ENCODE measurements at regions of chr6 and their contacts with region 1.

Region 1: DNA sequence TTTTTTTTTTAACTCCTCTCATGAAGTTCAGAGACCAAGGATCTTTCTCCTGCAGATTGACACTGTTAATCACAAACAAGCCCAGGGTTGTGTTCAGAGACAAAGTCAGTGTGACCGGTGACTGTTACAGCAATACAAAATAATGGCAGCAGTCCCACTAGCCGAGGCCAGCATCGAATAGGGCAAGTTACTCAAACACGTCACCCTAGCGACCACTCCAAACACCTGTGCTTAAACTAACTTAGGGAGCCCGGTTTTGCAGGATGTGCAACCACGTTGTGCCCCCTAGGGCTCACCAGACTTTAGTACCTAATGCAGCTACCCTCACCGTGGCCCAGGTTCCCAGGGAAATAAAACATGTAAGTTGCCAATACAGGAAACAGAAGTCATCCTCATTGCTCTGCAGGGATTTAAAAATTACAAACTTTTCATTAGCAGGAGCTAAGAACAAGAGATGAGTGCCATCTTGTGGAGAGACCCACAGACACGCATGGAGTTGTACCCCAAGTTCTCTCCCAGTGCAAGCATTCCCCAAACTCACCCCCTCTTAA is 38.1 kb downstream of the FAM50B start:
- DNase-seq: no peak
- ATAC-seq: peak in 3 of 4 donors; percentile 23 to 36 (median 25)
- H3K4me3 ChIP-seq: no peak overlapping the region
- H3K27ac ChIP-seq: peak overlapping the region in 1 of 12 donors; percentile 23
- H3K4me1 ChIP-seq: peaks cover 0 to 52% (median 26%) of the 10 kb centered on the region in 12 donors
- H3K27me3 ChIP-seq: no peaks in the 10 kb centered on the region
- CTCF ChIP-seq: peak; percentile 37 to 70 (median 56)
- POLR2A ChIP-seq: no peak

Region 2: DNA sequence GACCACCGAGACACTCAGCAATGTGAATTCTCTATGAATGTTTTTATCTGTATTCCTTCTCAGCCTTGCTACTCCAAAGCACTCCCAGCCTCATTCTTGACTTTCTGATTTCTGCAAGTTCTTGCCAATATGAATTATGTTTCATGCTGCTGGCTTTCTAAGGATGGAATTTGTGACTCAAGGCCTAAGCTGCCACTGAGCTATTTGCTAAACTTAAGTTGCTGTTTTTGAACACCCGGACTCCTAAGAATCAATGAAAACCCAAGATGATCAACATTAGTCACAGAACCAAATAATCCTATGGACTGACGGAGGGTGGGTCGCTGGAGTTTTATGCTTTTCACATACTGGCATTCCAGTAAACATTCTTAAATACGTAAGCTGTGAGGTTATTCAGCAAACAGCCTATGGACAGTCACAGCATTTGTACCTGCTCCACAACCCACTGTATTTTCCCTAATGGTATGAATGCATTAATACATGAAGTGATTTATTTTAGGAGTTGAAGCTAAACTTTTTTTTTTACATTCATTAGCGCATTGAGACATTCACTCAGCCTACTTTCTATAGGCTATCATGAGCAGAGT is 127.5 kb before region 1 on chr6:
- intact Hi-C with region 1: no loop called
- DNase-seq: no peak
- ATAC-seq: no peak
- H3K4me3 ChIP-seq: no peak overlapping the region
- H3K27ac ChIP-seq: no peak overlapping the region
- H3K4me1 ChIP-seq: peaks cover 0 to 3% (median 0%) of the 10 kb centered on the region in 12 donors
- H3K27me3 ChIP-seq: no peaks in the 10 kb centered on the region
- CTCF ChIP-seq: no peak
- POLR2A ChIP-seq: no peak

Region 3: DNA sequence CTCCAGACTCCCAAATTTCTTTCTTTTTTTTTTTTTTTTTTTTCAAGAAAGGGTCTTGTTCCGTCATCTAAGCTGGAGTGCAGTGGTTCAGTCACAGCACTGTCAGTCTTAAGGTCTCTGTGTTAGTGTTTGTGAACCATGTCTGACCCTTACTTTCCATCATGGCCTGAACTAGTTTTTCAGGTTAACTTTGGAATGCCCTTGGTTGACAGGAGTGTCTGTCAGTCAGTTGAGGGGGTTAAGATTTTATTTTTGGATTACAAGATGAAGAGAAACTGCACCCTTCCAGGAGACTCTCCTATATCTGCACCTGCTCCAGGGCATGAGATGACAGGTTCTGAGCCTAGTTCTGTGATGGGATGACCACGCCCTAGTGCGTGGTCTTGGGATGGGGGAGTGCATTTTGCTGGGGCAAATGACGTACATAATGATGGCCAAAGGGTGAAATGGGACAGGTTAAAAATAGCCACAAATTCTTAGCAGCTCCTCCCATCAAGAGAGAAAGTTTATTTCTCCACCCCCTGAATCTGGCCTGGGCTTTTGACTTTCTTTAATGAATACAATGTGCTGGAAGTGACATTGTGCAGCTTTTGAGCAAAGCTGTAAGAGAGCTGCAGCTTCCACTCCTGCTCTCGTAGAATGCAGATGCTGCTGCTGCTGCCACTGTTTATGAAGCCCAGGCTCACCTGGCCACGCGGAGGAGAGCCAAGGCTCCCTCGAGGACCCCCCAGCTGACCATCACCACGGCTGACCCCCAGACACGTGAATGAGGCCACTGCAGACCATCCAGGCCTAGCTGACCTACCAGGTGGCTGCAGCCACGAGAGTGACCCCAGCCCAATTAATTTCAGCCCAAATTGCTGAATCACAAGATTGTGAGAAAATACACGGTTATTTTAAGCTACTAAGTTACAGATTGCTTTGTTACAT is 67.8 kb before region 1 on chr6:
- intact Hi-C with region 1: loop called in 1 of 10 experiments (anchors 5 kb)
- DNase-seq: no peak
- ATAC-seq: peak in 1 of 4 donors; percentile 8
- H3K4me3 ChIP-seq: no peak overlapping the region
- H3K27ac ChIP-seq: peak overlapping the region in 1 of 12 donors; percentile 2
- H3K4me1 ChIP-seq: peaks cover 0 to 20% (median 13%) of the 10 kb centered on the region in 12 donors
- H3K27me3 ChIP-seq: no peaks in the 10 kb centered on the region
- CTCF ChIP-seq: no peak
- POLR2A ChIP-seq: no peak

Region 4: DNA sequence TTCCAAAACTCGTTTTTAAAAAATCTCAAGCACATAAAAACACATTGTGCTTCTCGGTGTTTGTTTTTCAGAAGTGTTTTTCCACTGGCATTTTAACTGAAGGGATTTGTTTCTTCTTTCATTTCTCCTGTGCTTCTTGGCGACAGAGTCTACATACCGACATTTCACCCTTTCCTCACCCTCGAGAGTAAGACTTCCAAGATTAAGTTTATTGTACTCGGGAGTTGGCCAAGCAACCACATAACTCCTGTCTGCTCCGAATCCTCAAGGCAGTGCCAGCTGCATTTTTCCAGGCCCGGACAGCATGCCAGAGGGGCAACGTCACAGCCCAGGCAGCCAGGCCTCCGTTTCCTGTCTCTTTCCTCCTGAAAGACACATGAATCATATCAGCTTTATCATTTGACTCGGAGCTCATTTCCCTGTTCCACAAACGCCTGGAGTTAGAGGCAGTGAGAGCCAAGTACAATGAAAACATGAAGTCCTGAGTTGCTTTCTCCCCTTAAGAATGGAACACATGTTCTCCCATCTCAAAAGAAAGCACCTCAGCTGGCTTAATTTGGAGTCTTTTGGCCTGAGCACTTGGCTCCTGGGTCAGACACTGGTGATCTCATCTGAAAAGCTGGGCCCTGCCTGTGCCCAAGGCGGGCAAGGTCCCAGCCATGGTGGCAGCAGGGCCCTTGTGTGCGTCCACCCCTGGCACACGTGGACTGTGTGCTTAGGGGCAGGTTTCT is 61.2 kb before region 1 on chr6:
- intact Hi-C with region 1: loop called in 1 of 10 experiments (anchors 5 kb)
- DNase-seq: peak; percentile 79 to 94 (median 86)
- ATAC-seq: peak; percentile 74 to 96 (median 94)
- H3K4me3 ChIP-seq: peak overlapping the region in 10 of 12 donors; percentile 2 to 41 (median 14)
- H3K27ac ChIP-seq: peak overlapping the region; percentile 82 to 94 (median 87)
- H3K4me1 ChIP-seq: peaks cover 9 to 45% (median 32%) of the 10 kb centered on the region in 12 donors
- H3K27me3 ChIP-seq: no peaks in the 10 kb centered on the region
- CTCF ChIP-seq: no peak
- POLR2A ChIP-seq: peak in 1 of 2 donors; percentile 30

Region 5: GRCh38 chr6:3929281-3929798 is 42.1 kb after region 1 on chr6:
- intact Hi-C with region 1: loop called in 9 of 10 experiments (anchors 2 to 5 kb)
- DNase-seq: peak in 1 of 5 donors; percentile 46
- ATAC-seq: peak in 1 of 4 donors; percentile 36
- H3K4me3 ChIP-seq: no peak overlapping the region
- H3K27ac ChIP-seq: peak overlapping the region in 3 of 12 donors; percentile 15 to 64 (median 26)
- H3K4me1 ChIP-seq: peaks cover 0 to 33% (median 9%) of the 10 kb centered on the region in 12 donors
- H3K27me3 ChIP-seq: no peaks in the 10 kb centered on the region
- CTCF ChIP-seq: no peak
- POLR2A ChIP-seq: no peak

Region 6: GRCh38 chr6:3977875-3978711 is 90.9 kb after region 1 on chr6:
- intact Hi-C with region 1: loop called in 2 of 10 experiments (anchors 2 to 10 kb)
- DNase-seq: peak in 3 of 5 donors; percentile 15 to 40 (median 32)
- ATAC-seq: peak in 3 of 4 donors; percentile 86 to 92 (median 87)
- H3K4me3 ChIP-seq: peak overlapping the region in 1 of 12 donors; percentile 4
- H3K27ac ChIP-seq: no peak overlapping the region
- H3K4me1 ChIP-seq: peaks cover 0 to 8% (median 0%) of the 10 kb centered on the region in 12 donors
- H3K27me3 ChIP-seq: no peaks in the 10 kb centered on the region
- CTCF ChIP-seq: peak; percentile 41 to 74 (median 60)
- POLR2A ChIP-seq: no peak

Region 7: GRCh38 chr6:3990692-3991501 is 103.7 kb after region 1 on chr6:
- intact Hi-C with region 1: loop called in 2 of 10 experiments (anchors 5 to 10 kb)
- DNase-seq: peak; percentile 88 to 92 (median 89)
- ATAC-seq: peak; percentile 77 to 95 (median 94)
- H3K4me3 ChIP-seq: peak overlapping the region in 11 of 12 donors; percentile 17 to 69 (median 52)
- H3K27ac ChIP-seq: peak overlapping the region in 9 of 12 donors; percentile 5 to 82 (median 63)
- H3K4me1 ChIP-seq: peaks cover 0 to 20% (median 3%) of the 10 kb centered on the region in 12 donors
- H3K27me3 ChIP-seq: no peaks in the 10 kb centered on the region
- CTCF ChIP-seq: peak; percentile 70 to 92 (median 88)
- POLR2A ChIP-seq: no peak

Measured in heart left ventricle (tissue), 16 donors.